ENCODE measurements at regions of chr17 and their contacts with region 1.

Region 1: DNA sequence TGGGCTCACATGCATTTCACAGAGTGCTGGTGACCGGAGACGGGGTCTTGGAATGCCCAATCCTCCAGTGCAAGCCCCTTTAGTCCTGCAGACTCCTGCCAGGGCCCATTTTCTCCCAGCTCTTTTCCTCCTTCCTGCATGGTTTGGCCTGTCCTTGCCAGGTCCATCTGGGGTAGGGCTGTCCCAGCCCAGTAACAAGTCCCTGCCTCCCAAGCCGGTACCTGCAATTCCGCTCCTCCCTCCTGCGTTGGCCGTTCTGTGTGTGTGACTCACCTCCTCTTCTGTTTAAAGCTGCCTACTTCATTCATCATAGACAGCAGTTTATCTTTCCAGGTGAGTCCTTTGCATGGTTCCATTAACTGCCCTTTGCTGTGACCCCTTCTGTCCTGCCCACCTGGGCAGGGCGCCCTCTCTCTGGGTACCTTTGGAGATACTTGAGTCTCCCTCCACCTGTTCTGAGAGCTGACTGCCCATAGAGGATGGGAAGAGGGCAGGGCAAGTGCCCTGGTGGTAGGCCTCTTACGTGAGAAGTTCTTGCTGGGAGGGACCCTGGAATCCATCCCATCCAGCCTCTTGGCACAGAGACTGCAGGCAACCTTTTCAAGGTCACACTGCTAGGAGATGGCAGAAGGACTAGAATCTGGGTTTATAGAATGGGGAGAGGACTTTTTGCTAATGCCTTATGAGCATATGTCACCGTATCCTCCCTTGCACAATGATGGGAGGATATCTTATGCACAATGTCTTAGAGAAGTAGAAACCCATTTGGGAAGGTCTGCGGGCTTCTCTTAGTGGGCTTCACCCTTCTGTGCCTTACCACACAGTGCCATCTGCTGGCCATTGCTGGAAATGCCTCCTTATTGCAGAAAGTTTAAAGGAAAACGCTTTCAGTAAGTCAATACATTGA is 29.7 kb upstream of the LGALS9 start:
- DNase-seq: peak; percentile 78 to 92 (median 88)
- H3K4me3 ChIP-seq: no peak overlapping the region
- H3K27ac ChIP-seq: no peak overlapping the region
- H3K4me1 ChIP-seq: peaks cover 4% of the 10 kb centered on the region
- H3K27me3 ChIP-seq: no peaks in the 10 kb centered on the region
- CTCF ChIP-seq: peak; percentile 80 to 95 (median 92)
- EP300 ChIP-seq: no peak
- POLR2A ChIP-seq: no peak

Region 2: GRCh38 chr17:27236717-27237315 is 364.5 kb before region 1 on chr17:
- intact Hi-C with region 1: loop called (anchors 2 to 5 kb)
- DNase-seq: peak; percentile 58 to 89 (median 72)
- H3K4me3 ChIP-seq: no peak overlapping the region
- H3K27ac ChIP-seq: no peak overlapping the region
- H3K4me1 ChIP-seq: no peaks in the 10 kb centered on the region
- H3K27me3 ChIP-seq: no peaks in the 10 kb centered on the region
- CTCF ChIP-seq: peak; percentile 52 to 94 (median 91)
- EP300 ChIP-seq: no peak
- POLR2A ChIP-seq: no peak

Region 3: DNA sequence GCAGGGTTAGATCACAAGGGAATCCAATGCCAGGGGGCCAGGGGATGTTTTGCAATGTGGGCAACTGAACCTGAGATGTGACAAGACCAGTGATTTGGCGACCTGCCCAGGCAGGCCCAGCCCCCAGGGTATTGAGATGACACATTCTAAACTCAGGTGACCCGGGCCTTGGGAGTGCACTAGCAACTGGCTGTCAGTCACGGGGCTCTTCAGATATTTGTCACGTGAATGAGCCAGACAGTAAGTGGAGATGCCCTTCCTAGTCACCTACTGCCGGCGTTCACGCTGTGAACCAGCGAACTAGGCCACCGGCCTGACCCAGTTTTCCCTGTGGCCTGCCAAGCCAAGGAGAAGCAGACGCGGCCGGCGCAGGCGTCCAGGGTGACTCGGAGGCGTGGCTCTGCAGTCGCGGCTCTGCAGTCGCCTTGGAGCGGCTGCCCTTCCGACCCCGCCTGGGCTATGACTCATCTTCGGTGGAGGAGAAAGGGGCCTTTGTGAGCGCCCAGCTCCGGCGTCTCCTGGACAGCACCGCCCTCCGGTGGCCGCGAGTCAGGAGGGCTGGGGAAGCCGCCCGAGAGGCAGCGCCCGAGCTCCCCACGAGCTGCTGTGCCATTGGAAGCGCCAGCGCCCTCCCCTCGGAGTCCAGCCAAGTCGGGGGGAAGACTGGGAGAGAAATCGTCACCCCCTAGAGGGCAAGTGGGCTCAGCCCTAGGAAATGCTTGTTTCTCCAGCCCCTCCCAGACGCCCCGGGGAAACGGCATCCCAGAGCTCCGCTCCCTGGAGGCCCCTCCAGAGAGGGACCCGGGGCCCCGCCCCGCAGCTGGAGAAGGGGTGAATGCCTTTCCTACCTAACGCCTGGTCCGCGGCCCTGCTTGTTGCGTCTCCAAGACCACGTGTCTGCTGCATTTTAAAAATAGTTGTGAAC is 268.6 kb before region 1 on chr17:
- intact Hi-C with region 1: no loop called
- DNase-seq: peak; percentile 97
- H3K4me3 ChIP-seq: peak overlapping the region; percentile 46
- H3K27ac ChIP-seq: peak overlapping the region; percentile 82 to 92
- H3K4me1 ChIP-seq: peaks cover 4% of the 10 kb centered on the region
- H3K27me3 ChIP-seq: no peaks in the 10 kb centered on the region
- CTCF ChIP-seq: peak; percentile 92 to 96 (median 93)
- EP300 ChIP-seq: no peak
- POLR2A ChIP-seq: peak; percentile 22

Region 4: DNA sequence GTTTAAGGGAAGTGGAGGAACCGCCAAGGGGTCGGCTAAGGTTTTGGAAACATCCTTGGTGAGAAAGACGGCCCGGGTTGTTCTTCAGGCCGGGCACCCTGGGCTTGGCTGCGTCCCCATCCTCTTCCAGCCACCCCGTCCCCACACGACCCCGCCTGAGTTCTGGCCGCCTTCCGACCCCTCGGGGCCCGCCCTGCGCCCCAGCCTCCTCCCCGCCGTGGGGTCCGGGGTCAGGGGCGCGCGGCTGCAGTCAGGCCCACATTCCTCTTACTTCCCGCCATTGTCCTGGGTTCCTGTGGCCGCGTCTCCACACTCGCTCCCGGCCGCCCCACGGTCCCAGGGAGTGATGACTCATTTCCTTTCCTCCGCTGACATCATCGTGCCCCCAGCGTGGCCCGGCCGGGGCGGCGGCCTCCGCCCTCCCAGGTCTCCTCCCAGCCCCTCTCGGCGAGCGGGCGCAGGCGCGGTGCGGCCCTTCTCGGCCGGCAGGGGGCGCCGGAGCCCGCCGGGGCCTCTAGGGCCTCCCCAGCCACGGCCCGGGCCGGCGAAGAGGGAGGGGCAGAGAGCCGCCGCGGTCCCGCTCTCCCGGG is 247.8 kb before region 1 on chr17:
- intact Hi-C with region 1: loop called (anchors 1 to 5 kb)
- DNase-seq: peak; percentile 91 to 95 (median 94)
- H3K4me3 ChIP-seq: peak overlapping the region; percentile 59
- H3K27ac ChIP-seq: peak overlapping the region; percentile 80 to 94
- H3K4me1 ChIP-seq: no peaks in the 10 kb centered on the region
- H3K27me3 ChIP-seq: no peaks in the 10 kb centered on the region
- CTCF ChIP-seq: peak; percentile 88 to 99 (median 99)
- EP300 ChIP-seq: peak; percentile 7
- POLR2A ChIP-seq: peak; percentile 94

Region 5: GRCh38 chr17:27455914-27456680 is 145.2 kb before region 1 on chr17 and contains the start of gene KSR1:
- intact Hi-C with region 1: loop called (anchors 5 to 10 kb)
- DNase-seq: peak; percentile 83 to 88 (median 85)
- H3K4me3 ChIP-seq: peak within 1 kb of the TSS; percentile 85
- H3K27ac ChIP-seq: peak within 1 kb of the TSS; percentile 75 to 98
- H3K4me1 ChIP-seq: peaks cover 6% of the 10 kb centered on the region
- H3K27me3 ChIP-seq: no peaks in the 10 kb centered on the region
- CTCF ChIP-seq: peak; percentile 49 to 61 (median 56)
- EP300 ChIP-seq: no peak
- POLR2A ChIP-seq: peak; percentile 67
- total RNA-seq, gene KSR1: 29.2 to 84.8 (median 39.5) TPM

Region 6: GRCh38 chr17:27494192-27495091 is 106.9 kb before region 1 on chr17:
- intact Hi-C with region 1: no loop called
- DNase-seq: peak in 1 of 5 donors; percentile 37
- H3K4me3 ChIP-seq: no peak overlapping the region
- H3K27ac ChIP-seq: no peak overlapping the region
- H3K4me1 ChIP-seq: peaks cover 9% of the 10 kb centered on the region
- H3K27me3 ChIP-seq: no peaks in the 10 kb centered on the region
- CTCF ChIP-seq: no peak
- EP300 ChIP-seq: no peak
- POLR2A ChIP-seq: no peak

Region 7: GRCh38 chr17:27654654-27655524 is 53.6 kb after region 1 on chr17:
- intact Hi-C with region 1: loop called (anchors 2 to 5 kb)
- DNase-seq: peak; percentile 42 to 79 (median 69)
- H3K4me3 ChIP-seq: no peak overlapping the region
- H3K27ac ChIP-seq: no peak overlapping the region
- H3K4me1 ChIP-seq: no peaks in the 10 kb centered on the region
- H3K27me3 ChIP-seq: no peaks in the 10 kb centered on the region
- CTCF ChIP-seq: peak; percentile 61 to 71 (median 63)
- EP300 ChIP-seq: no peak
- POLR2A ChIP-seq: no peak

Region 8: GRCh38 chr17:27879987-27880608 is 278.8 kb after region 1 on chr17:
- intact Hi-C with region 1: no loop called
- DNase-seq: peak; percentile 64 to 82 (median 76)
- H3K4me3 ChIP-seq: no peak overlapping the region
- H3K27ac ChIP-seq: no peak overlapping the region
- H3K4me1 ChIP-seq: peaks cover 4% of the 10 kb centered on the region
- H3K27me3 ChIP-seq: no peaks in the 10 kb centered on the region
- CTCF ChIP-seq: peak; percentile 46 to 65 (median 61)
- EP300 ChIP-seq: no peak
- POLR2A ChIP-seq: no peak